ENCODE measurements at regions of chr5 and their contacts with region 1.

Region 1: DNA sequence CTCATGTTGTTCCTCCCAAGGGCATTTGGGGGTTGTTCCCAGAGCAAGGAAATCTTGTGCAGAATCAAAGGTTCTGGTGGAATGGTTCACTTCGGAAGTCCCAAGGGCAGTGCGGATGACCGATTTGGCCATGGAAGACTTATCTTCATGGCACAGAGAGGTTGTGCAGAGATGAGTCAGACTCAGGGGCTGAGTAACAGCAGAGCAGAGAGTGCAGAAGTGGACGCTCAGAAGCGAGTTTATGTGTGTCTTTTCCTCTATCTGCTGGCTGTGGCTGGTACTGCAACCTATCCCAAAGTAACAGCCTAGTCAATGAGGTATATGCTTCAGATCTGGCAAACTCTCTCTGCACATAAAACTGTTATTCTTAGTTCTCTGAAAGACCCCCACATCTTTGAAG is 118.1 kb downstream of the DPYSL3 start:
- DNase-seq: no peak
- ATAC-seq: peak; percentile 97
- H3K4me3 ChIP-seq: no peak overlapping the region
- H3K27ac ChIP-seq: no peak overlapping the region
- H3K4me1 ChIP-seq: no peaks in the 10 kb centered on the region
- H3K27me3 ChIP-seq: peaks cover 0 to 3% of the 10 kb centered on the region in 2 experiments; a peak in 3 of 4 replicates
- CTCF ChIP-seq: peak; percentile 45 to 59 (median 53); a peak in 5 of 6 replicates
- EP300 ChIP-seq: no peak
- POLR2A ChIP-seq: no peak
- RAD21 ChIP-seq: peak; percentile 40

Region 2: DNA sequence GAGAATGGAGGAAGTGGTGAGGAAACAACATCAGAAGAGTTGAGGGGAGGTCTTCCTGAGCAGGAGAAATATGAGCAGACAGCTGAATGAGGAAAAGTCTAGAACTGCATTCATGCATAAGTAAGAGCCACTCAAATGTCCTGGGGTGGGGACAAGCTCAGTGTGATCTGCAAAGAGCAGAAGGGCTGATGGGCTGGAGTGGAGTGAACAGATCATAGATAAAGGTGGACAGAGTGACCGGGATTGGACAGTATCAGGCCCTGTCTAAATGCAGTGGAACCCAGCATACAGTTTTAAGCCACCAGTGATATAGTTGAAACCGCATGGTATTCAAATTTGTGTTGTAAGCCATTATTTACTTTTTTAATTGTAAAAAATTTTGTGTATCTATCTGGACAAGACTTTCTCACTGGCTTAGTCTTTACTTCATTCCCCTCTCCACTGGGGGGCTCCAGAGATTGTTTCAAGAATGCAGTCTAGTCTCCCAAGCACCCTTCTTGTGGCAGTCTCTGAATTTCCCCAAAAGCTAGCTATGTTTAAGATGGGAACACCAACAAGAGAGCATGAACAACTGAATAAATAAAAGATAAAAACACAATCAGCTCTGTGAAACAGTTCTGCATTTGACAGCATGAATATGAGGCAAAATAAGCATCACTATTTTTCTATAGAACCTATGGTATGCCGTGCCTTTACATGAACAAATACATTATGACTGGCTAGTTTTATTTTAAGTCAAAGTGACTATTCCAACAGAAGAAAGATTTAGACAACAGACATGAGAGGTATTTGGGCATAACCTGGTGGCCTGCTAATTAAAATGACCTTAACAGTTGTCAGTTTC is 167.6 kb before region 1 on chr5:
- CTCF ChIA-PET with region 1: interaction called, 18 read pairs
- POLR2A ChIA-PET with region 1: no interaction called
- RAD21 ChIA-PET with region 1: interaction called, 4 read pairs
- SMC1A ChIA-PET with region 1: interaction called, 8 read pairs
- in situ Hi-C with region 1: no loop called
- intact Hi-C with region 1: loop called (anchors 5 kb)
- DNase-seq: no peak
- ATAC-seq: peak; percentile 86
- H3K4me3 ChIP-seq: no peak overlapping the region
- H3K27ac ChIP-seq: no peak overlapping the region
- H3K4me1 ChIP-seq: no peaks in the 10 kb centered on the region
- H3K27me3 ChIP-seq: no peaks in the 10 kb centered on the region
- CTCF ChIP-seq: peak; percentile 36 to 58 (median 39); a peak in 5 of 6 replicates
- EP300 ChIP-seq: no peak
- POLR2A ChIP-seq: no peak
- RAD21 ChIP-seq: peak; percentile 56

Region 3: DNA sequence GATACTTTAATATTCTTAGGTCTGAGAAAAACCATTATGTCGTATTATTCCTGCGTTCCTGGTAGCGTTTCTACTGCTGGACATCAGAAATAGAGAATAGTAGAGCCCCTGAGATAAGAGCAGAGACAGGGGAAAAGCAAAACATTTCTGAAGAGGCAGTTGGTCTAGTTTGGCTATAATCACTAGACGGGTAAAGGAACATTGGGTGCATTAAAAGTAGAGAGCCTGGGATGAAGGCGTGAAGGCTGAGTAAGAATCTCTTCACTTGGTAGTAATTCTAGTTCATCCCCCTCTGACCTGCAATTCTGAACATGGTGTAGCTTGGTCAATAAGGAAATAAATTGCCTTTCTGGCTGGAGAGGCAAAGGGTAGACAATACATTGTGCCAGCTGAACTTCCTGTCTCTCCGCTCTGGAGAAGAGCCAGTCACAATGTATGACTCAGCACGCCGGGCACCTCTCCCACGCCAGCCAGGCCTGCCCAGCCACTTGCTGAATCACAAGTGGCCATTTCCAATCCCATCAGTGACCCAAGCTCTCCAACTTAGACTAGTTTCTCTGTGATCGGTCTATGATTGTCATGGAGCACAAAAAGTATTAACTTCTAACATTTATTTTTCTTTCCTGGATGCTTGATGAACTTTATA is 81.6 kb before region 1 on chr5:
- CTCF ChIA-PET with region 1: no interaction called
- POLR2A ChIA-PET with region 1: no interaction called
- RAD21 ChIA-PET with region 1: no interaction called
- SMC1A ChIA-PET with region 1: no interaction called
- in situ Hi-C with region 1: no loop called
- intact Hi-C with region 1: no loop called
- DNase-seq: no peak
- ATAC-seq: no peak
- H3K4me3 ChIP-seq: no peak overlapping the region
- H3K27ac ChIP-seq: no peak overlapping the region
- H3K4me1 ChIP-seq: no peaks in the 10 kb centered on the region
- H3K27me3 ChIP-seq: no peaks in the 10 kb centered on the region
- CTCF ChIP-seq: no peak
- EP300 ChIP-seq: no peak
- POLR2A ChIP-seq: no peak
- RAD21 ChIP-seq: no peak